Sigmoid colon (tissue), 7 donors: ENCODE measurements at regions of chr4 and their contacts with region 1.

Region 1: GRCh38 chr4:40897557-40898203 is 147.9 kb downstream of the NSUN7 start:
- DNase-seq: peak; percentile 71
- H3K4me3 ChIP-seq: no peak overlapping the region
- H3K27ac ChIP-seq: no peak overlapping the region
- H3K4me1 ChIP-seq: no peaks in the 10 kb centered on the region
- H3K27me3 ChIP-seq: no peaks in the 10 kb centered on the region
- CTCF ChIP-seq: peak; percentile 35 to 68 (median 54)
- EP300 ChIP-seq: no peak
- POLR2A ChIP-seq: no peak

Region 2: GRCh38 chr4:40736910-40737309 is 160.8 kb before region 1 on chr4:
- intact Hi-C with region 1: loop called (anchors 1 kb)
- DNase-seq: no peak
- H3K4me3 ChIP-seq: no peak overlapping the region
- H3K27ac ChIP-seq: no peak overlapping the region
- H3K4me1 ChIP-seq: no peaks in the 10 kb centered on the region
- H3K27me3 ChIP-seq: no peaks in the 10 kb centered on the region
- CTCF ChIP-seq: peak in 1 of 4 experiments; percentile 16
- EP300 ChIP-seq: no peak
- POLR2A ChIP-seq: no peak

Region 3: GRCh38 chr4:40840985-40841571 is 56.6 kb before region 1 on chr4:
- intact Hi-C with region 1: loop called (anchors 5 kb)
- DNase-seq: peak; percentile 66
- H3K4me3 ChIP-seq: no peak overlapping the region
- H3K27ac ChIP-seq: no peak overlapping the region
- H3K4me1 ChIP-seq: peaks cover 0 to 29% (median 13%) of the 10 kb centered on the region in 4 donors
- H3K27me3 ChIP-seq: no peaks in the 10 kb centered on the region
- CTCF ChIP-seq: peak in 2 of 4 experiments; percentile 10 to 44
- EP300 ChIP-seq: no peak
- POLR2A ChIP-seq: no peak

Region 4: DNA sequence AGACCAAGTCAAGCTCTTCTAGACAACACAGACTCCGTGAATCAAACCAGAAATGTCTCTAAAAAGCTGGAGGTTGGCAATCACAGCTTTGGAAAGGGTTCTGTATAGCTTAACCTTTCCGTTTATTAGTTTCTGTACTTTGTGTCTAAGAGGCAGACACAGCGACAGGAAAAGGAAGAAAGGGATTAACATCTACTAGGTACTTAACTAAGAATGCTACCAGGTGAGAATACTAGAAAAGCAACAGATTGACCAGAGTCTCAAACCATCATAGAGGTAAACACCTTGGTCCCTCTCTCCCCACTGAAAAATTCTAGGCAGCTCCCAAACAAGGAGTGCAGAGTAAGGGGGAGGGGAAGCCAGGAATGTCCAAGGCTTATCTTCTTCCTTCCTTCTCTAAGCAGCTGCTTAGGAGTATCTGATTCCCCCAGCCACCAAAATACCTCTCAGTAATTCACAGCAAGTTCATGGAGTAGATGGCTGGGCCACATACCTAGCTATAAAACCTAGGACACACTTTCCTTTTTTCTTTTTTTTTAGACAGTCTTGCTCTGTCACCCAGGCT is 235.9 kb after region 1 on chr4:
- intact Hi-C with region 1: no loop called
- DNase-seq: no peak
- H3K4me3 ChIP-seq: no peak overlapping the region
- H3K27ac ChIP-seq: no peak overlapping the region
- H3K4me1 ChIP-seq: peaks cover 0 to 36% (median 16%) of the 10 kb centered on the region in 4 donors
- H3K27me3 ChIP-seq: no peaks in the 10 kb centered on the region
- CTCF ChIP-seq: no peak
- EP300 ChIP-seq: no peak
- POLR2A ChIP-seq: no peak